ENCODE measurements at regions of chr9 and their contacts with region 1.

Region 1: DNA sequence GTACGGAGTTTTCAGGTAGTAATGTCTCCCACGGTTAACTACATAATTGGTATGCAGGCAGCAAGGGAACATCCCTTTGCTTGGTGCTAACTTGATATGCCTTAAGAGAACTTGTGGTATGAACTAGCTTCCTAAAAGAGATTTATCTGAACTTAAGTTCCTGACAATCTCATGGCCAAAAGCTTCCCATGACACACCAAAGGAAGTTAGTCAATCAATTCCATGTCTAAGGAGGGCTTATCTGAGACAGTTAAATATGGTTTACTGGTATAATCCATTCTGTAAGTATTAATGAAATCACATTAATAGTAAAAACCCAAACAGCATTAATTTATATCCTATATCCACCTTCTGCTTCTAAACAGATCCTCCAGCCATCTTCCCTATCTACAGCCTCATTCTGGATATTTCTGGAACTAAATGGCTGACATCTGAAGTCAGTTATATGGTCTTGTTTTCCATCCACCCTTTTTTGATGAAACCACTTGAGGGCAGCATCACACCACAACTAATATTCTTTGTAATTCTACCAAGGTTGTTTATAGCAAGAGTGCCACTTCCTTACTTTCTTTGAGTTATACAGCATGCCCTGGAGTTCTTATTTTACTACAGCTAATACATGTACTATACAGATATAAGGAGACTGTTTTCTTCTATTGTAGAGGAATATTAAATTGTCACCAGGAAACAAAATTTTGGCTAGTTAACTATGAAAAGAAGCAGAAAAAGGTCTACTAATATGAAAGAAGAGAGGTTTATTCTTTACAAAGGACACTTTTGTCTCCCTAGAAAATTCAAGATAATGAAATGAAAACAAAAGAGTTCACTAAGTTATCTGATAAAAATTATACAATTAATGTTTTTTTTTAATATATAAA is 34.7 kb downstream of the SHOC1 start:
- DNase-seq: peak; percentile 75 to 87 (median 82)
- H3K4me3 ChIP-seq: no peak overlapping the region
- H3K27ac ChIP-seq: no peak overlapping the region
- H3K4me1 ChIP-seq: no peaks in the 10 kb centered on the region
- H3K27me3 ChIP-seq: no peaks in the 10 kb centered on the region

Region 2: DNA sequence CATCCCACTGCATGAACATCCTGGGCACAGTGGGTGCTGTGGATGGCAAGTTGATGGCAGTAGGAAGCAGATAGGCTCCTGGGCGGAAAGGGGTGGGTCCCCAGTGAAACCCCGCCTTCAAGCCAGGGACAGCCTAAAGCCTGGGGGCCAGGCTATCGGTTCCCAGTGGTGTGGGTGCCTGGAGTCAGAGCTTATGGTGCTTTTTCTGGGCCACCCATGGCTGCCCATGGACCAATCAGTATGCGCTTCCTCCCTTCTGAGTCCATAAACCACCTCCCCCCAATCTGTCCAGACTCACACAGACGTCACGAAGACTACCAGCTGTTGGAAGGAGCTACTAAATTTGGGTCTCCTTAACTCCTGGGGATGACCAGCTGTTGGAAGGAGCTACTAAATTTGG is 258.4 kb before region 1 on chr9:
- CTCF ChIA-PET with region 1: no interaction called
- POLR2A ChIA-PET with region 1: no interaction called
- DNase-seq: no peak
- H3K4me3 ChIP-seq: no peak overlapping the region
- H3K27ac ChIP-seq: no peak overlapping the region
- H3K4me1 ChIP-seq: no peaks in the 10 kb centered on the region
- H3K27me3 ChIP-seq: no peaks in the 10 kb centered on the region

Region 3: DNA sequence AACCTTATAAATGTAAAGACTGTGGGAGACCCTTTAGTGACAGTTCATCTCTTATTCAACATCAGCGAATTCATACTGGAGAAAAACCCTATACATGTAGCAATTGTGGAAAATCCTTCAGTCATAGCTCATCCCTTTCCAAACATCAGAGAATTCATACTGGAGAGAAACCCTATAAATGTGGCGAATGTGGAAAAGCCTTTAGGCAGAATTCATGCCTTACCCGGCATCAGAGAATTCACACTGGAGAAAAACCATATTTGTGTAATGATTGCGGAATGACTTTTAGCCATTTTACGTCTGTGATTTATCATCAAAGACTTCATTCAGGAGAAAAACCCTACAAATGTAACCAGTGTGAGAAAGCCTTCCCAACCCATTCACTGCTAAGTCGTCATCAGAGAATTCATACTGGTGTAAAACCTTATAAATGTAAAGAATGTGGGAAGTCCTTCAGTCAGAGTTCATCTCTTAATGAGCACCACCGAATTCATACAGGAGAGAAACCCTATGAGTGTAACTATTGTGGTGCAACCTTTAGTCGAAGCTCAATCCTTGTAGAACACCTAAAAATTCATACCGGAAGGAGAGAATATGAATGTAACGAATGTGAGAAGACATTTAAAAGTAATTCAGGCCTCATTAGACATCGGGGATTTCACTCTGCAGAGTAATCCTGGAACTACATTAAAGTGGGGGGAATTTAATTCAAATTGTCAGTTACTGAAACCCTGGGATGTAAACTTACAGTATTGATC is 217.3 kb before region 1 on chr9:
- CTCF ChIA-PET with region 1: no interaction called
- POLR2A ChIA-PET with region 1: no interaction called
- DNase-seq: no peak
- H3K4me3 ChIP-seq: no peak overlapping the region
- H3K27ac ChIP-seq: no peak overlapping the region
- H3K4me1 ChIP-seq: no peaks in the 10 kb centered on the region
- H3K27me3 ChIP-seq: no peaks in the 10 kb centered on the region

Region 4: DNA sequence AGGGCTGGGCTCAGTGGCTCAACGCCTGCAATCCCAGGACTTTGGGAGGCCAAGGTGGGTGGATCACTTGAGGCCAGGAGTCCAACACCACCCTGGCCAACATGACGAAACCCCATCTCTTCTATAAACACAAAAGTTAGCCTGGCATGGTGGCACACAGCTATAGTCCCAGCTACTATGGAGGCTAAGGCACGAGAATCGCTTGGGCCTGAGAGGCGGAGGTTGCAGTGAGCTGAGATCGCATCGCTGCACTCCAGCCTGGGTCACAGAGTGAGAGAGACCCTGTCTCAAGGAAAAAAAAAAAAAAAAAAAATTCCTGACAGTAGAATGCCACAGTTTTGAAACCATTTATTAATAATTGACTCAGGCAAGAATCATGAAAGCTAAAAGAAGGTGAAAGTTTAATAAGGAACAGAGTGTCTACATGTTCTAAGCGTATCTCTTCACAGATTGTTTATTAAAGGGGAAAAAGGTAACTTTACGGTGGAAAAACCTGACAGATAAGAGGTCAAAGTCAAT is 154.9 kb before region 1 on chr9:
- CTCF ChIA-PET with region 1: no interaction called
- POLR2A ChIA-PET with region 1: no interaction called
- DNase-seq: no peak
- H3K4me3 ChIP-seq: no peak overlapping the region
- H3K27ac ChIP-seq: no peak overlapping the region
- H3K4me1 ChIP-seq: no peaks in the 10 kb centered on the region
- H3K27me3 ChIP-seq: peaks cover 0 to 11% (median 2%) of the 10 kb centered on the region in 5 experiments

Region 5: DNA sequence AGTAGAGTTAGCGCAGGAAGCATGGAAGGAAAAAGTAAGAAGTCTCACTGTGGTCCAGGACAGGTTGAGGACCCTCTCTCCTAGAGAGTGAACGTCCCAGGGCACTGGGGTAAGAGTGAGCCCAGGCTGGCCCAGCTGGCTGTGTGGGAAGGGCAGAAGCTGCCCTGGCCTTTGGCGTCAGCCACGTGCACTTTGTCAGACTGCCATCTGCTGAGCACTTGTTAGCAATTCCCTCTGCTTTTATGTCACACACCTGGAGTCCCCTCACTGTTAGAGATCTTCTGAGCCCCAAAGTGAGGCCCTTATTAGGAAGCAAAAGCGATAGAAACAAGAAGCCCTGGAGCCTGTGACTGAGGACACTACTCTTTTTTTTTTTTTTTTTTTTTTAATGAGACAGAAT is 215.7 kb after region 1 on chr9:
- CTCF ChIA-PET with region 1: interaction called, 10 read pairs
- POLR2A ChIA-PET with region 1: no interaction called
- DNase-seq: peak; percentile 24 to 39 (median 33)
- H3K4me3 ChIP-seq: no peak overlapping the region
- H3K27ac ChIP-seq: no peak overlapping the region
- H3K4me1 ChIP-seq: no peaks in the 10 kb centered on the region
- H3K27me3 ChIP-seq: peaks cover 0 to 47% (median 9%) of the 10 kb centered on the region in 5 experiments

Region 6: DNA sequence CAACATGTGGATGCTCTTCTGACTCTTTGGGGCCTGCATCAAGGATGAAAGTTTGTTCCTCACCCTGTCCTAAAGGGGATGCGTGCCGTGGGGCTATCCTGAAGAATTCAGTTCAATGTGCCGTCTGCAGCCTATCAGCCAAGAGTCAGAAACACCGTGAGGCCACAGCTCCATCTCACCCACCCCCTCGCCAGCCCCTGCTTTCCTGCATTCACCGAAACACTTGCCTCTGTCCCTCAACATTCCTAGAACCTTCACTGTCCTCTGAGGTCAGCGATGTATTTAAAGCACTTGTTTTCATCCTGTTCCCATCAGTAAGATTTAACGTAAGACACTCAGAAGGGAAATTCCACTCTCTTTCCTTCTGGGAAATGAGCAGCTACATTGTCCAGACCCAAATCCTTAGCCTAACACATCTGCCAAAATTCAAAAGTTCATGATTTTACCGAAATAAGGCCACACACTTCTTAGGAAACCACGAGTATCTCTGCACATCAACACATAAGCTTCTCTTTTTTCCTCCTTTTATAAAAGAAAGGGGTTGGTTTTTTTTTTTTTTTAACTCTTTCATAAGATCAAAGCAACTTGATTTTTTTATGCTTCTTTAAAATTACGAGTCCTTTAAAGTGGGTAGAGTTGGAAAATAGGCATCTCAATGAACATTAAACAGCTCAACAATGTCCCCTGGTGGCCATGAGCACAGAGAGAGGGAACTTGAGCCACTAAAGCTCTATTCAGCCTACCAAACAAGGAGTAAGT is 314.4 kb after region 1 on chr9:
- CTCF ChIA-PET with region 1: interaction called, 105 read pairs
- POLR2A ChIA-PET with region 1: interaction called, 3 read pairs
- DNase-seq: peak; percentile 56 to 69 (median 66)
- H3K4me3 ChIP-seq: no peak overlapping the region
- H3K27ac ChIP-seq: no peak overlapping the region
- H3K4me1 ChIP-seq: peaks cover 0 to 7% (median 0%) of the 10 kb centered on the region in 4 experiments
- H3K27me3 ChIP-seq: no peaks in the 10 kb centered on the region

Measured in common myeloid progenitor, CD34-positive (primary cell).